ENCODE measurements at regions of chr6 and their contacts with region 1.

Region 1: GRCh38 chr6:42547407-42548329 is 16.2 kb upstream of the UBR2 start:
- DNase-seq: peak; percentile 91
- ATAC-seq: peak; percentile 100
- H3K4me3 Mint-ChIP-seq: peak overlapping the region; percentile 59
- H3K27ac Mint-ChIP-seq: peak overlapping the region; percentile 40
- H3K4me1 Mint-ChIP-seq: peaks cover 22% of the 10 kb centered on the region
- H3K27me3 Mint-ChIP-seq: peaks cover 10% of the 10 kb centered on the region

Region 2: DNA sequence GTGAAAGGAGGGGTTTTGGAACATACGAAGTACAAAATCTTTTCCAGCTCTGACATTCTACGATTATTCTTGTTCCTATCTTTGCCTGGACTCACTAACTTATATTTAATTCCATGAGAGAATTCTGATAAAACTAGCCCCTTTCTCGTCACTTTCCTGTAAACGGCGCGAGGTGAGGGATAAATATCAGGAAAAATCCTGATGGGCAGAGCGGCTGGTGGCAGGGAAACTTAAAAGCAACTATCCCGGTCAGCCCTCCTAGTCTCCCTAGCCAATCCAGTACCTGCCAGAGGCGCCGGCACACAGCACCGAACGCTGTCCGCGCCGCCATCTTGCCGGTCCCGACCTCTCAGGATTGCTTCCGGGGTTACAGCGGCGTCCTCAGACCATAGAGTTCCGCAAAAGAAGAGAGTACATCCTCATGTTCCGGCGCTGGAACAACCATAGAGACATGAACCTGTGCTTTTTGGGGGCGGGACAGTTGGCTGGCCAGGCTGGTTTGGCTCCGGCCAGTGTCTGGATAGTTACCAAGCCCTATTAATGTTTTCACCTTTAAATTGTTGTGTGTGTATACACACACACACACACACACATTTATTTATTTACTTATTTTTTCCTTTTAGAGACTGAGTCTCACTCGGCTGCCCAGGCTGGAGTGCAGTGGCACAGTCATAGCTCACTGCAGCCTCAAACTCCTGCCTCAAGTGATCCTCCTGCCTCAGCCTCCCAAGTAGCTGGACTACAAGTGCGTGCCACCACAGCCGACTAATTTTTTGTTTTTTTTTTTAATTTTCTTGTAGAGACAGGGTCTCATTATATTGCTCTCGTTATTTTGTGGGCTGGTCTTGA is 329.9 kb before region 1 on chr6 and contains the start of gene MRPS10:
- CTCF ChIA-PET with region 1: interaction called, 30 read pairs
- DNase-seq: peak; percentile 95
- ATAC-seq: peak; percentile 100
- H3K4me3 Mint-ChIP-seq: peak within 1 kb of the TSS; percentile 98
- H3K27ac Mint-ChIP-seq: peak within 1 kb of the TSS; percentile 92
- H3K4me1 Mint-ChIP-seq: peaks cover 35% of the 10 kb centered on the region
- H3K27me3 Mint-ChIP-seq: no peaks in the 10 kb centered on the region
- total RNA-seq, gene MRPS10: 28.8 to 36.5 TPM

Region 3: GRCh38 chr6:42304053-42304712 is 243.5 kb before region 1 on chr6:
- CTCF ChIA-PET with region 1: interaction called, 32 read pairs
- DNase-seq: no peak
- ATAC-seq: no peak
- H3K4me3 Mint-ChIP-seq: no peak overlapping the region
- H3K27ac Mint-ChIP-seq: no peak overlapping the region
- H3K4me1 Mint-ChIP-seq: peaks cover 9% of the 10 kb centered on the region
- H3K27me3 Mint-ChIP-seq: no peaks in the 10 kb centered on the region

Region 4: GRCh38 chr6:42390228-42390934 is 157.3 kb before region 1 on chr6:
- CTCF ChIA-PET with region 1: interaction called, 24 read pairs
- DNase-seq: peak; percentile 83
- ATAC-seq: peak; percentile 78
- H3K4me3 Mint-ChIP-seq: peak overlapping the region; percentile 67
- H3K27ac Mint-ChIP-seq: peak overlapping the region; percentile 99
- H3K4me1 Mint-ChIP-seq: peaks cover 96% of the 10 kb centered on the region
- H3K27me3 Mint-ChIP-seq: no peaks in the 10 kb centered on the region

Region 5: GRCh38 chr6:42453031-42453653 is 94.5 kb before region 1 on chr6:
- CTCF ChIA-PET with region 1: interaction called, 19 read pairs
- DNase-seq: peak; percentile 87
- ATAC-seq: peak; percentile 75
- H3K4me3 Mint-ChIP-seq: peak overlapping the region; percentile 97
- H3K27ac Mint-ChIP-seq: no peak overlapping the region
- H3K4me1 Mint-ChIP-seq: peaks cover 30% of the 10 kb centered on the region
- H3K27me3 Mint-ChIP-seq: peaks cover 6% of the 10 kb centered on the region

Region 6: GRCh38 chr6:42537536-42537935 is 10.1 kb before region 1 on chr6:
- CTCF ChIA-PET with region 1: interaction called, 48 read pairs
- DNase-seq: no peak
- ATAC-seq: no peak
- H3K4me3 Mint-ChIP-seq: no peak overlapping the region
- H3K27ac Mint-ChIP-seq: no peak overlapping the region
- H3K4me1 Mint-ChIP-seq: no peaks in the 10 kb centered on the region
- H3K27me3 Mint-ChIP-seq: peaks cover 9% of the 10 kb centered on the region